Activated CD4-positive, alpha-beta T cell treated with anti-CD3 and anti-CD28 coated beads, Interleukin-2, amount 10 ng/mL, durations not matched to agents 24 days and 14 days (primary cell): ENCODE measurements at regions of chr6 and their contacts with region 1.

Region 1: DNA sequence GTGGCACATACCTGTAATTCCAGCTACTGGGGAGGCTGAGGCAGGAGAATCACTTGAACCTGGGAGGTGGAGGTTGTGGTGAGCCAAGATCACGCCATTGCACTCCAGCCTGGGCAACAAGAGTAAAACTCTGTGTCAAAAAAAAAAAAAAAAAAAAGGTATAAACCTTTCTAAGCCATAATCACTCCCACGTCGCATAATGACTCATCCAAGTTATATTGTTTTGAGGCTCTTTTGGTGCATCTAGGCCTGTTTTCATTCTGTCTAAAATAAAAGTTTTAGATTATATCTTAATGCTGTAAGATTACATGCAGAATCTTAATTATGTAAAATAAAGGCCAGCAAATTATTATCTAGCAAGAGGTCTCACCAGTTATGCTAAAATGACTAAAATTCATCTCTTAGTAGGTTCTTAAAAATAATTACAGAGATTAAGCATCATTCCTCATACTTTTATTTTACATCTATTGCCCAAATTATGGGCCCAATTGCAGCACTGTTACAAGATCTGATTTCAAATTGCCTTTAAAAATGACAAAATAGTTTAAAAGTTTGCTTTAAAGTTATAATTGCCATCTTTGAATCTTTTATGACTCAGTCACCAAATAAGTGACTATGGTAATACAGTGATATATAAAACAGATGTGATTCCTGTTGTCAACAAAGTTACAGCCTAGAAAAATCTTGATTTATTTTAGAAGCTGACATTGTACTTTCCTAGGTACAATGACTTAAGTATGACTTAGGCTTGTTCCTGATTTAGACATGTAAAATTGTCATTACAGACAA is 10.4 kb upstream of the SUMO4 start:
- DNase-seq: no peak
- H3K4me3 Mint-ChIP-seq: no peak overlapping the region
- H3K27ac Mint-ChIP-seq: peak overlapping the region; percentile 46
- H3K4me1 Mint-ChIP-seq: peaks cover 60% of the 10 kb centered on the region
- H3K27me3 Mint-ChIP-seq: no peaks in the 10 kb centered on the region

Region 2: DNA sequence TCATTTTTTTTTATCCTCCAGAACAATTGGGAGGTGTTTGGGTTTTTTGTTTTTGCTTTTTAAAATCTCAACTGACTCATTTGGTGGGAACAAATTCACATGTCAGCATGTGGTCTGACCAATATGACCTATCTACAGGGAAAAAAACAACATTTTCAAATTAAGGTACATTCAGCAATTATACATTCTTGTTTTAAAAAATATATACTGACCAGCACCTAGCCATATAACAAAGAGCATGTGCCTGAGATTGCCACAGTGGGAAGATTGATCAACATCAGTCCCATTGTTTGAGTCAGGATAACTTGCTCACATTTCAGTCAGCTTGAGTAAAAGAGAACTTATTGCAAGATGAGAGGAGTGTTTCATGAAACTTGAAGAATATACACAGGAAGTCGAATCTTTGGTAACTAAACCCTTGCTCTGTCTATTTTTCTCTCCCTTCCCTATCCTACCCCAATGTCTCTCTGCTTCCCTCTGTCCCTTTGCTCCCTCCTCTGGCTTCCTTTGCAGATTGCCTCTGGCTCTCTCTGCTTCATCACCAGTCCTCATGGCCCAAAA is 235.4 kb before region 1 on chr6:
- intact Hi-C with region 1: no loop called
- DNase-seq: peak; percentile 62
- H3K4me3 Mint-ChIP-seq: peak overlapping the region; percentile 71
- H3K27ac Mint-ChIP-seq: peak overlapping the region; percentile 94
- H3K4me1 Mint-ChIP-seq: peaks cover 69% of the 10 kb centered on the region
- H3K27me3 Mint-ChIP-seq: no peaks in the 10 kb centered on the region

Region 3: DNA sequence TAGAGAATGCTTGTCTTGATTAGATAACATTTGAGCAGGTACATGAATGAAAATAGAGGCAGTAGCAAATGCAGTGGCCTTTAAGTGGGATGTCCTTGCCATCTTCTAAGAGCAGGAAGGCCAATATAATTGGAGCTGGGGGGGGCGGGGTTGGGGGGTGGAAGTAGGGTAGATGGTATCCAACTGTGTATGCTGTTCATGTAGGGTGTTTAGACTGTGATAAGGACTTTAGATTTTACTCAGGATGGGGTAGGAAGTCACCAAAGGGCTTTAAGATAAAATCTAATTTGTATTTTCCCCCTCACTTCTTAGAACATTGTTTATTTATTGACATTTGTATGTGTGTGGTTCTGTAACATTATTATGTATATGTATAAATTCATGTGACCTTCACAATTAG is 60.2 kb before region 1 on chr6:
- intact Hi-C with region 1: loop called (anchors 2 kb)
- DNase-seq: no peak
- H3K4me3 Mint-ChIP-seq: peak overlapping the region; percentile 61
- H3K27ac Mint-ChIP-seq: peak overlapping the region; percentile 73
- H3K4me1 Mint-ChIP-seq: peaks cover 80% of the 10 kb centered on the region
- H3K27me3 Mint-ChIP-seq: no peaks in the 10 kb centered on the region